Activated CD4-positive, alpha-beta T cell treated with anti-CD3 and anti-CD28 coated beads, Interleukin-2, amount 10 ng/mL, durations not matched to agents 24 days and 14 days (primary cell): ENCODE measurements at regions of chr3 and their contacts with region 1.

Region 1: GRCh38 chr3:28050895-28051294 is 190.5 kb upstream of the CMC1 start:
- DNase-seq: no peak
- H3K4me3 Mint-ChIP-seq: no peak overlapping the region
- H3K27ac Mint-ChIP-seq: peak overlapping the region; percentile 4
- H3K4me1 Mint-ChIP-seq: peaks cover 9% of the 10 kb centered on the region
- H3K27me3 Mint-ChIP-seq: peaks cover 2% of the 10 kb centered on the region

Region 2: DNA sequence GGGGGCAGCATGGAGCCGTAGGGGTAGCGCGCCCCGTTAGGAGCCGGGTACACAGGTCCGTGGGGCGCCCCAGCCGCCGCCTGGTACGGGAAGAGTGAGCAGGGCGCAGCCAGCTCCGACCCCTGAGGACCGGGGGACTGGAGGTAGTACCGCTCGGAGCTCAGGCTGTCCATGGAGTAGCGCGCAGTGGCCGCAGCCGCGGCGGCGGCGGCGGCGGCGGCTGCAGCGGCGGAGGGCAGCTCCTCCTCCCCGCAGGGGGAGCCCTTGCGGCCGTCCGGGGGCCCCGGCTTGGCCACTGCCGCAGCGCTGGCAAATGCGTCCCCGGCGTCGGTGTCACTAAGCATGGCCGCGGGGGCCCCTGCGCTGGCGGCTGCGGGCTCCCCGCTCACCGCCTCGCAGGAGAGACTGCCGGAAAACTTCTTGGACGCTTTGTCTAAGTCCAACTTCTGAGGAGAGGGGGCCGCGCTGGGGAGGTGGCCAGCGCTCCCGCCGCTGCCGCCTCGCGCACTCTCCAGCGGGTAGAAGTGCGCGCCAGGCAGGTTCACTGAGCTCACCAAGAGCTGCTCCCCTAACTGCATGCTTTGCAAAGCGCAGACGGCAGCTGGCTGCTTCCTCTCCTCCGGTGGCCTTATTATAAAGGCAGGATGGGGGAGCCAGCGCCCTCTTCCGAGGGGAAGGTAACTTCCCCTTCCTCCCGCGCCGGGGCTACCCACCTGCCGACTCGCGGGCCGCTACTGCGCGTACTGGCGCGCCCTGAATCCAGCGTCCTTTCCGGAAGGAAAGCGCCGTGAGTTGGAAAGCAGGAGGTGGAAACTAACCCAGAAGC is 329.0 kb before region 1 on chr3 and contains the start of gene EOMES:
- intact Hi-C with region 1: loop called (anchors 5 kb)
- DNase-seq: peak; percentile 90
- H3K4me3 Mint-ChIP-seq: peak within 1 kb of the TSS; percentile 85
- H3K27ac Mint-ChIP-seq: peak within 1 kb of the TSS; percentile 66
- H3K4me1 Mint-ChIP-seq: peaks cover 32% of the 10 kb centered on the region
- H3K27me3 Mint-ChIP-seq: peaks cover 85% of the 10 kb centered on the region
- total RNA-seq, gene EOMES: 7.4 and 7.8 TPM in 2 replicates

Region 3: DNA sequence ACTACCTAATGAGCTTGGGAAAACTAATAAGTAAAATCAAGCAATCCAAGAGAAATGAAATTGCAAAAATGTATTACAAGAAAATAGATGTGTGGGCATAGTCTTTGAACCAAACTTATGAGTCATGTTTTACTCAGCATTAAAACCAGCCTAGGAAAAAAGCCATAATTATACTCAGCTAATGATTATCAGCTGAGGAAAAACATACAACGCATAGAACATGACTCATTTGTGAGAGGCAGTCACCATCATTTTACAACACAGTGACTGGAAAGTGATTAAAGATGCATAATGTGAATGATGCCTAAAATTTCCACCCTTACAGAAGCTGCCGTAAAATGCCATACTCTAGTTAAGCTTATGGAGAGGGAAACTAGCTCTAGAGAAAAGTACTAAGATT is 90.8 kb before region 1 on chr3:
- intact Hi-C with region 1: loop called (anchors 2 kb)
- DNase-seq: no peak
- H3K4me3 Mint-ChIP-seq: no peak overlapping the region
- H3K27ac Mint-ChIP-seq: no peak overlapping the region
- H3K4me1 Mint-ChIP-seq: peaks cover 5% of the 10 kb centered on the region
- H3K27me3 Mint-ChIP-seq: no peaks in the 10 kb centered on the region

Region 4: GRCh38 chr3:28000608-28001007 is 50.3 kb before region 1 on chr3:
- intact Hi-C with region 1: no loop called
- DNase-seq: no peak
- H3K4me3 Mint-ChIP-seq: no peak overlapping the region
- H3K27ac Mint-ChIP-seq: no peak overlapping the region
- H3K4me1 Mint-ChIP-seq: no peaks in the 10 kb centered on the region
- H3K27me3 Mint-ChIP-seq: no peaks in the 10 kb centered on the region

Region 5: DNA sequence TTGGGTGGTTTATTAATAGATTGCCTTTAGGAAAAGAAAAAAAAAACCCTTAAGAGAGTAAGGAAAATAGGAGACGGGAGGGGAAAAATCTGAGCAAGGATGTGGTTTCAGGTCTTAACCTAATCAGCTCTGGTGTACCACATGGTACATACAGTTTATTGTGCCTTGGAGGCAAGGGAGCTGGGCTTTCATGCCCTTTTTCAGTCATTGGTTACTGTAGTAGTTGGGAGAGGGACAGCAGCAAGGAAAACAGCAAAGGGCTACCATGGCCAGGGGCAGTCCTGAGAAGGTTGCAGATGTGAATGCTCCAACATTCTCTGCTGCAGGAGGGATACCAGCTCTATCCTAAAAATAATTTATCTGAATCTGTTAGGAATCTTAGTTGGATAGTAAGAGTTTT is 196.4 kb after region 1 on chr3:
- intact Hi-C with region 1: loop called (anchors 5 kb)
- DNase-seq: no peak
- H3K4me3 Mint-ChIP-seq: no peak overlapping the region
- H3K27ac Mint-ChIP-seq: no peak overlapping the region
- H3K4me1 Mint-ChIP-seq: peaks cover 45% of the 10 kb centered on the region
- H3K27me3 Mint-ChIP-seq: no peaks in the 10 kb centered on the region